Heart left ventricle (tissue), 16 donors: ENCODE measurements at regions of chr10 and their contacts with region 1.

Region 1: DNA sequence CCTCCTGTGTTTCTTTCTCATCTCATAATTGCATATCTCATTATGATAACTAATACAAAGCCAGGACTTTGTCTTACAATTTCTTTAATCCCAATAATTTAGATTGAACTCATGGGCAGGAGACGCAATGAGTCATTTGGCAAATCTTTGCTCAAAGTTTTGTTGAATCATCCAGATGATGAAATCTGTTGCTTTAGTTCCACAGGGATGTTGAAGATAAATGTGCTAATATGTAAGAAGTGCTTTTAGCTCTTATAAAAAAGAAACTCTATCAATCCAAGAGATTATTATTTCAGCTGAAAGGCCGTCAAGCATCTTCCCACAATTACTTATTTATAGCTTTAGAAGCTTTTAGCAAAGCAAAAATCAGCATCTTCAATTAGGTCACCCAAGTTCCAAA is 36.7 kb upstream of the ANK3 start:
- DNase-seq: no peak
- ATAC-seq: peak in 1 of 4 donors; percentile 45
- H3K4me3 ChIP-seq: no peak overlapping the region
- H3K27ac ChIP-seq: no peak overlapping the region
- H3K4me1 ChIP-seq: peaks cover 0 to 34% (median 21%) of the 10 kb centered on the region in 12 donors
- H3K27me3 ChIP-seq: no peaks in the 10 kb centered on the region
- CTCF ChIP-seq: no peak
- POLR2A ChIP-seq: no peak

Region 2: GRCh38 chr10:60237977-60238758 is 188.2 kb before region 1 on chr10:
- intact Hi-C with region 1: loop called in 9 of 10 experiments (anchors 2 to 10 kb)
- DNase-seq: peak in 3 of 5 donors; percentile 10 to 35 (median 23)
- ATAC-seq: peak; percentile 66 to 83 (median 78)
- H3K4me3 ChIP-seq: peak overlapping the region in 2 of 12 donors; percentile 17 to 27
- H3K27ac ChIP-seq: peak overlapping the region in 10 of 12 donors; percentile 14 to 84 (median 72)
- H3K4me1 ChIP-seq: peaks cover 0 to 36% (median 24%) of the 10 kb centered on the region in 12 donors
- H3K27me3 ChIP-seq: no peaks in the 10 kb centered on the region
- CTCF ChIP-seq: peak in 9 of 12 donors; percentile 15 to 46 (median 27)
- POLR2A ChIP-seq: no peak

Region 3: GRCh38 chr10:60299961-60300883 is 126.2 kb before region 1 on chr10:
- intact Hi-C with region 1: loop called in 3 of 10 experiments (anchors 10 kb)
- DNase-seq: peak in 4 of 5 donors; percentile 42 to 58 (median 54)
- ATAC-seq: peak; percentile 89 to 94 (median 90)
- H3K4me3 ChIP-seq: peak overlapping the region; percentile 33 to 68 (median 52)
- H3K27ac ChIP-seq: peak overlapping the region; percentile 70 to 88 (median 80)
- H3K4me1 ChIP-seq: peaks cover 0 to 23% (median 10%) of the 10 kb centered on the region in 12 donors
- H3K27me3 ChIP-seq: no peaks in the 10 kb centered on the region
- CTCF ChIP-seq: peak in 8 of 12 donors; percentile 12 to 47 (median 28)
- POLR2A ChIP-seq: peak in 1 of 2 donors; percentile 21

Region 4: GRCh38 chr10:60314069-60314940 is 112.1 kb before region 1 on chr10:
- intact Hi-C with region 1: loop called in 4 of 10 experiments (anchors 10 kb)
- DNase-seq: no peak
- ATAC-seq: peak in 2 of 4 donors; percentile 37 to 72
- H3K4me3 ChIP-seq: no peak overlapping the region
- H3K27ac ChIP-seq: no peak overlapping the region
- H3K4me1 ChIP-seq: peaks cover 0 to 9% (median 0%) of the 10 kb centered on the region in 12 donors
- H3K27me3 ChIP-seq: no peaks in the 10 kb centered on the region
- CTCF ChIP-seq: no peak
- POLR2A ChIP-seq: no peak

Region 5: DNA sequence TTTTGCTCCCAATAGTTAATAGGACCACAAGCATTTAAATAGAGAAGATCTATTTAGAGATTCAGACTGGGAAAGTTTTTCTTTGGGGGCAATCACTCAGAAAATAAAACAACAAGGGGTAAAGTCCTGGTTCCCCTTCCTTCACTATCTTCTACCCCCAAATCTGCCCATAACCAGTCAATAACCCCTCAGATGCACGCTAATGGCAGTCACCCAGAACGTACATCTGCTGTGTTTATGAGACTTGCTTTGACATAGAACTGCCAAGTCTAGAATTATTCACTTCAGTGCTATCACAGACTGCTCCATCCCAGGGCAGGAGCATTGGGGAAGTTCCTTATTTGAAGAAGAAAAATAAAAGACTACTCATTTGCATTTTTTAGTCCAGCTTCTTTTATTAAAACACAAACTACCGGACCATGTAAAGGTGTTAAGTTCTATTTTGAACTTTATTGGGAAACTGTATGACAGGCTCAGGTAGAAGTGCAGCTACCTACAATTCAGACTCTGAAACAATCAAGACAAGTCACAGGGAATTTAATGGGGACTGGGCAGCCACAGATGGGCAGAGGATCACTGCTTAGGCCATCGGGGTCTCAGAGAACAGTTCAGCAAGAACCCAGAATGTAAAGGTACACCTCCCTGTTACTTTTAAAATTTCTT is 75.1 kb before region 1 on chr10:
- intact Hi-C with region 1: loop called in 1 of 10 experiments (anchors 5 kb)
- DNase-seq: no peak
- ATAC-seq: no peak
- H3K4me3 ChIP-seq: no peak overlapping the region
- H3K27ac ChIP-seq: no peak overlapping the region
- H3K4me1 ChIP-seq: peaks cover 0 to 36% (median 9%) of the 10 kb centered on the region in 12 donors
- H3K27me3 ChIP-seq: no peaks in the 10 kb centered on the region
- CTCF ChIP-seq: no peak
- POLR2A ChIP-seq: no peak

Region 6: GRCh38 chr10:60513281-60513680 is 86.9 kb after region 1 on chr10:
- intact Hi-C with region 1: no loop called
- DNase-seq: no peak
- ATAC-seq: no peak
- H3K4me3 ChIP-seq: no peak overlapping the region
- H3K27ac ChIP-seq: no peak overlapping the region
- H3K4me1 ChIP-seq: peaks cover 0 to 11% (median 3%) of the 10 kb centered on the region in 12 donors
- H3K27me3 ChIP-seq: no peaks in the 10 kb centered on the region
- CTCF ChIP-seq: no peak
- POLR2A ChIP-seq: no peak